GM10248 (cell line): ENCODE measurements at regions of chr7 and their contacts with region 1.

Region 1: DNA sequence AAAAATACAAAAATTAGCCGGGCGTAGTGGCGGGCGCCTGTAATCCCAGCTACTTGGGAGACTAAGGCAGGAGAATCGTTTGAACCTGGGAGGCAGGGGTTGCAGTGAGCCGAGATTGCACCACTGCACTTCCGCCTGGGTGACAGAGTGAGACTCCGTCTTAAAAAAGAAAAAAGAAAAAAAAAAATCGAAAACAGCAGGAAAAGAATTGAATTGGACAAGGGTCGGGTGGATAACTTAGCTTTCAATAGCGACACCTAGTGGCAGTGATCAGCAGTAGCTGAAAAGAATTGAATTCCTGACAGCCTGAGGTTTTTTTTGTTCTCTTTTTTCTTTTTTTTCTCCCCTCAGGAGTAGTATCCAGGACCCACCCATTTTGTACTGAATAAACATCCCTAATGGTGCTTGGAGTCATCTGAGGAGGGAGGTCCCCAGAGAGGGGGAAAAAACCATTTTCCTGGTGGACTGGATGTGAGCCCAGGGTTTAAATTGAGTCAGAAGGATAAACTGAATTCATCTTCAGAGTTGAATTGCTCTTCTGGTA is 55.1 kb downstream of the CYCS start:
- DNase-seq: peak; percentile 81
- CTCF ChIP-seq: peak; percentile 77

Region 2: DNA sequence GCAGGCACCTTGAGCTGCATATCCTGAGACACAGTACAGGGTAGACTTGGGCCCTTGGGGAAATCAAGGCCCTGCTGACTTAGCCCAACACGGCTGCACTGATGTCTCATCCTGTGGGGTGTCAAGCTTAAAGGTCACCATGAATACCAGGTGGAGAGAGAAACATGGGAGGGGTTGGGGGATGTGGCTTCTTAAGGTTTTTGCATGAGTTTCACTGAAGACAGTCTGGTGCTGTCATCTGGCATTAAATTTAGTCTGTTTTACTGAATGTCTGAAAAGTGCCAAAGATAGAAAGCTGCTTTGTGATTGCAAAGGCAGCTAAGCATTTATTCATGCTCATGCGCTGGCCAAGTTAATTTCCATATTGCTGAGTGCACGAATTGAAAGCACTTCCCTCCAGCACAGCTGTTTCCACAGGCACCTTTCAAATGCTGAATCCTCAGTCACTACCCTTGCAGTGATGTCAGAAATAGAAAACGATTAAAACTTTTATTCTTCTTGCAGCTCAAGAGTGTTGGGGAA is 192.1 kb before region 1 on chr7:
- CTCF ChIA-PET with region 1: no interaction called
- POLR2A ChIA-PET with region 1: no interaction called
- DNase-seq: peak; percentile 36
- CTCF ChIP-seq: no peak

Region 3: DNA sequence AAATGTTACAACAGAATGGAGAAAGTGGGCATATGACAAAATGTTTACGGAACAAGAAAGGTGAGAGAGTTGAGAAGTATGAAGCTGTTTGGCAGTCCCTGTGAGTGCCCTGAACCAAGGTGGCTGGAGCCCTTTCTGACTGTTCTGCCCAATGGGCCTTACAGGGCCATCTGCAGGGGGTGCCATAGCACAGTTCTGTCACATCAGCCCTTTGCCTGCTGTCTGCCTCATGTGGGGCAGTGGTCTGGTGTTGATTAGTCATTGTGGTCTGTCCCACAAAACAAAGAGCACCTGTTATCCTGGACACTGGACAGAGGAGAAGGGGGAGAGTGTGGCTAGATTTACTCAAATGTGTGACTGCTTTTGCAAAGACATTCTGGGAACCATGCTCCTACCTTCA is 38.5 kb before region 1 on chr7:
- CTCF ChIA-PET with region 1: interaction called, 10 read pairs
- POLR2A ChIA-PET with region 1: no interaction called
- DNase-seq: no peak
- CTCF ChIP-seq: no peak